ENCODE measurements at regions of chr18 and their contacts with region 1.

Region 1: GRCh38 chr18:50878345-50879301 is at the start of gene ME2:
- DNase-seq: peak; percentile 97
- total RNA-seq, gene ME2: 63.8 TPM

Region 2: GRCh38 chr18:50819728-50820378 is 58.8 kb before region 1 on chr18 and contains the start of gene MRO:
- intact Hi-C with region 1: loop called (anchors 2 kb)
- DNase-seq: peak; percentile 94
- total RNA-seq, gene MRO: 1.4 TPM

Region 3: DNA sequence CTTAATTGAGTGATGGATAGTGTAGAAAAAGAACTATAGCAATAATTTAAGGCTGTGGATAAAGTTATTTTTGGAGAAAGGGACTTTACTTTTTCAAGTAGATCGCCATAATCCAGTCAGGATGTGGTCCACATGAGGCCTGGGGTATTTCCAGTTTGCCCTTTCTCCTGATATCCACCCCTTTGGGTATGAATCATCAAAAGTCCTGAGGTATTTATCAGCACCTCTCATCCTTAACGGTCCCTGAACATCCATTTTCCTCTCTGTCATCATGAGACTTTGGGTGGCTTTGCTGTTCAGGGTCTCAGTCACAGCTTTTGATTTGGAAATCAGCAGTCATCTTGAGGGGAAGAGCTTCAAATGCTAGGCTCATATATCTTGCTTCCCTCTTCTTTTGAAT is 49.9 kb after region 1 on chr18:
- intact Hi-C with region 1: no loop called
- DNase-seq: no peak

Region 4: DNA sequence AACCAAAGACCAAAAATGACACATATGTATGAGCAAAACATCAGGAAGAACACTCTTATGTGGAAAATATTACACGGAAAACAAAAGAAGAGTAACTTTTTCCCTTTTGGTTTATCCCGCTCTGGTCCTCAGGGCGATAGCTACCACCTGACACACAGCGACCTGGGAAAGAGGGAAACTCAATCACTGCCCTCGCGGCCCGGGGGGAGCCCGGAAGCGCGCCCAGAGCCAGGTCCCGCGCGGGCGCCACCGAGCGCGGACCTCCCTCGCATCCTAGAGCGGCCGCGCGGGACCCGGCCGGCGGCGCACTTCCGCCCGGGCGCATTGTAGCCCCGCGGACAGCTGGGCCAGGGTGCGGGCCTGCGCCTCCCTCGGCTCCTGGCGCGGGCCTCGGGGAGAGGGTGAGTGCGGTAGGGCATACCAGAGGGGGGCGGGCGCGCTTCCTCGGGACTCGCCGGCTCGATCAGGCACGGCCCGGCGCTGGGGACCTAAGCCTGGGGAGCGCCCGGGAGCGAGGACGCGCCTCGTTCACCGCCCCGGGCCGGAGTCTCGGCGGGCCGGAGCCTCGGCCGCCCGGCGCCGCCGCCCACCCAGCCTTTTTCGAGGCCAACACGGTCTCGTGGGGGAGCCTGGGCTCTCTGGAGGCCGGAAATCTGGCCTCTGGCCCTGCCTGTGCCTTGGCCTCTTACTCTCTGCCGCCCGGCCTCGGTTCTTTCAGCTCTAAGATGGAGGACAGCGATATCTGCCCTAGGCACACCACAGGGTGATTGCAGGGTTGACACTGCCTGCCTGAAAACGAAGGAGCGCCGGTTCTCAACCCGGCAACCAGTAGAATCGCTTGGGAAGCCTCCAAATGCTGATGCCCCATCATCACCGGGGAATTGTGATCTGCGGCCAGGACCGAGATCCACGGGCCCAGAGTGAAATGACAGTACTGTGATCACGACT is 89.4 kb after region 1 on chr18 and contains the start of gene ELAC1:
- intact Hi-C with region 1: loop called (anchors 5 kb)
- DNase-seq: peak; percentile 88
- total RNA-seq, gene ELAC1: 4.5 TPM

Region 5: GRCh38 chr18:51029694-51030536 is 151.3 kb after region 1 on chr18 and contains the start of gene SMAD4:
- intact Hi-C with region 1: loop called (anchors 2 kb)
- DNase-seq: peak; percentile 99
- total RNA-seq, gene SMAD4: 88.7 TPM

Region 6: GRCh38 chr18:51070545-51070944 is 191.9 kb after region 1 on chr18:
- intact Hi-C with region 1: no loop called
- DNase-seq: no peak

Region 7: GRCh38 chr18:51278045-51278649 is 399.5 kb after region 1 on chr18:
- intact Hi-C with region 1: no loop called
- DNase-seq: no peak